ENCODE measurements at regions of chr12 and their contacts with region 1.

Region 1: DNA sequence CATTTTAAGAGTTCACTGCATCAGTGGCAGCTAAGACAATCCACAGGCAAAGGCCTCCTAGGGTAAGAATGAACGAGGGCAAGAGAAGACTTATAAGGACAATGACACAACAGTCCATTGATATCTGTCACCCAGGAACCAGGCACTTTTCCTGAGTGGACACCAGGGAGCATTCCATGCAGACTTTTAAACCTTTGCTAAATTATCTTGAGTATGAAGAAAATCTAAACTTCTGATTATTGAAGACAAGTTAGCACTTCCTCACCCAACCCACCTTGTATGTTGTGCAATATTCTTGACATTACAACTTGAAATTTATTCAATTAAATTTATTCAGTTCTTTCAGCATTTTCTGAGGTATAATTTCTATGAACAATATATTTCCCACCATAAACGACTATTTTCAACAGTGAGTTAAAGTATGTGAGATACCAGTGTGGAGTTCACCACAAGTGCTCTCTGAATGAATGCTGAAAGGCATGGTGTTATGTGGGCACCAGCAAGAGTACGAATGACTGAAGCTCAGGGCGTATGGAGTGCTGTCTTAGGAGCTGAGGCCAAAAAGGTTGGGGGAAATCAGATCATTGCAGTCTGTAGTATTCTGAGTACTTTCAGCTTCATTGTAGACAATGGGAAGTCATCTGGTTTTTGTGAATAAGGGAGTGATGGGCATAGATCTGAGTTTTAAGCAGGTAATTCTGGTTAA is 124.3 kb upstream of the LMNTD1 start:
- DNase-seq: no peak
- H3K4me3 ChIP-seq: no peak overlapping the region
- H3K4me3 Mint-ChIP-seq: no peak overlapping the region
- H3K27ac ChIP-seq: no peak overlapping the region
- H3K27ac Mint-ChIP-seq: no peak overlapping the region
- H3K4me1 ChIP-seq: no peaks in the 10 kb centered on the region
- H3K4me1 Mint-ChIP-seq: no peaks in the 10 kb centered on the region
- H3K27me3 ChIP-seq: no peaks in the 10 kb centered on the region
- H3K27me3 Mint-ChIP-seq: no peaks in the 10 kb centered on the region
- CTCF ChIP-seq: no peak

Region 2: GRCh38 chr12:25659621-25660020 is 17.8 kb before region 1 on chr12:
- intact Hi-C with region 1: no loop called
- DNase-seq: no peak
- H3K4me3 ChIP-seq: no peak overlapping the region
- H3K4me3 Mint-ChIP-seq: no peak overlapping the region
- H3K27ac ChIP-seq: no peak overlapping the region
- H3K27ac Mint-ChIP-seq: no peak overlapping the region
- H3K4me1 ChIP-seq: no peaks in the 10 kb centered on the region
- H3K4me1 Mint-ChIP-seq: no peaks in the 10 kb centered on the region
- H3K27me3 ChIP-seq: no peaks in the 10 kb centered on the region
- H3K27me3 Mint-ChIP-seq: peaks cover 0 to 2% (median 0%) of the 10 kb centered on the region in 3 donors
- CTCF ChIP-seq: no peak

Region 3: GRCh38 chr12:25789541-25789944 is 112.2 kb after region 1 on chr12:
- intact Hi-C with region 1: loop called in 1 of 2 experiments (anchors 10 kb)
- DNase-seq: no peak
- H3K4me3 ChIP-seq: no peak overlapping the region
- H3K4me3 Mint-ChIP-seq: no peak overlapping the region
- H3K27ac ChIP-seq: no peak overlapping the region
- H3K27ac Mint-ChIP-seq: no peak overlapping the region
- H3K4me1 ChIP-seq: no peaks in the 10 kb centered on the region
- H3K4me1 Mint-ChIP-seq: peaks cover 3% of the 10 kb centered on the region
- H3K27me3 ChIP-seq: no peaks in the 10 kb centered on the region
- H3K27me3 Mint-ChIP-seq: peaks cover 0 to 1% (median 0%) of the 10 kb centered on the region in 3 donors
- CTCF ChIP-seq: no peak